ENCODE measurements at regions of chr18 and their contacts with region 1.

Region 1: GRCh38 chr18:22800551-22800951 is 132.6 kb upstream of the RBBP8 start:
- DNase-seq: no peak
- H3K4me3 Mint-ChIP-seq: no peak overlapping the region
- H3K27ac Mint-ChIP-seq: no peak overlapping the region
- H3K4me1 Mint-ChIP-seq: no peaks in the 10 kb centered on the region
- H3K27me3 Mint-ChIP-seq: peaks cover 4% of the 10 kb centered on the region

Region 2: GRCh38 chr18:22348521-22349316 is 451.8 kb before region 1 on chr18:
- CTCF ChIA-PET with region 1: no interaction called
- POLR2A ChIA-PET with region 1: no interaction called
- intact Hi-C with region 1: no loop called
- DNase-seq: no peak
- H3K4me3 Mint-ChIP-seq: peak overlapping the region; percentile 65
- H3K27ac Mint-ChIP-seq: peak overlapping the region; percentile 35
- H3K4me1 Mint-ChIP-seq: peaks cover 20% of the 10 kb centered on the region
- H3K27me3 Mint-ChIP-seq: peaks cover 22% of the 10 kb centered on the region

Region 3: GRCh38 chr18:22521026-22521707 is 279.4 kb before region 1 on chr18:
- CTCF ChIA-PET with region 1: no interaction called
- POLR2A ChIA-PET with region 1: no interaction called
- intact Hi-C with region 1: no loop called
- DNase-seq: no peak
- H3K4me3 Mint-ChIP-seq: no peak overlapping the region
- H3K27ac Mint-ChIP-seq: no peak overlapping the region
- H3K4me1 Mint-ChIP-seq: no peaks in the 10 kb centered on the region
- H3K27me3 Mint-ChIP-seq: peaks cover 2% of the 10 kb centered on the region

Region 4: DNA sequence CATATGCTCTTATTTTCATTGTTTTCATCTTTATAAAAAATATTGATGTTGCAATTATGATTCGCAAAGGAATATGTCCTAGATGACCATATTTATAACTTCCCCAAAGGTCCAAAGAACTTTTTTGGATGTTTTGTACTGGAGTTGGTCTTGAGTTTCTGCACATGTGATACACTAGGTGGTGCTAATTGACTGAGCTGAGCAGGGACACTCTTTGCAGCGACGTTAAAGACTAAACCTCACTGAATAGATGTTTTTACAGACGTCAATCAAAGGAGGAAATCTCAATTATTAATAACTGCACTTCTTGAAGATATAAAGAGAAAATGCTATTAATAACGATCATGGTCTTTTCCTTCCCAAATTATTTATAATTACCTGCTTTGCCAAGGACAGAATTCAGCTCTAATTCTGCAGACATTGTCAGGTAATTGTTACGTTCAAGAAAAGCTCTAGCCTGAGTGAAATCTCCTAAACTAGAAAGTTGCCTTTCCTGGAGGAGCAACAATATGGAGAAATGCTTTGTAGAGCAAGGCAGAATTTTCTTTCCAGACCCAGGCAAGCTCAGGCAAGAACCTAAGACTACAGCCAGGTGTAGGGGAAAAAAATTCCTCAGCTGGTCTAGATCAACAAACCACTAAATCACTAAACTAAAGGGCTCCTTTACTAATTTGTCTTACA is 13.2 kb after region 1 on chr18:
- CTCF ChIA-PET with region 1: interaction called, 27 read pairs
- POLR2A ChIA-PET with region 1: no interaction called
- intact Hi-C with region 1: no loop called
- DNase-seq: no peak
- H3K4me3 Mint-ChIP-seq: no peak overlapping the region
- H3K27ac Mint-ChIP-seq: no peak overlapping the region
- H3K4me1 Mint-ChIP-seq: no peaks in the 10 kb centered on the region
- H3K27me3 Mint-ChIP-seq: peaks cover 19% of the 10 kb centered on the region

Region 5: GRCh38 chr18:22977847-22978701 is 177.5 kb after region 1 on chr18:
- CTCF ChIA-PET with region 1: interaction called, 19 read pairs
- POLR2A ChIA-PET with region 1: no interaction called
- intact Hi-C with region 1: loop called (anchors 1 kb)
- DNase-seq: no peak
- H3K4me3 Mint-ChIP-seq: peak overlapping the region; percentile 30
- H3K27ac Mint-ChIP-seq: peak overlapping the region; percentile 89
- H3K4me1 Mint-ChIP-seq: peaks cover 19% of the 10 kb centered on the region
- H3K27me3 Mint-ChIP-seq: no peaks in the 10 kb centered on the region

Region 6: GRCh38 chr18:22983175-22983574 is 182.6 kb after region 1 on chr18:
- CTCF ChIA-PET with region 1: interaction called, 19 read pairs
- POLR2A ChIA-PET with region 1: no interaction called
- intact Hi-C with region 1: loop called (anchors 1 kb)
- DNase-seq: no peak
- H3K4me3 Mint-ChIP-seq: no peak overlapping the region
- H3K27ac Mint-ChIP-seq: no peak overlapping the region
- H3K4me1 Mint-ChIP-seq: peaks cover 8% of the 10 kb centered on the region
- H3K27me3 Mint-ChIP-seq: no peaks in the 10 kb centered on the region

Region 7: DNA sequence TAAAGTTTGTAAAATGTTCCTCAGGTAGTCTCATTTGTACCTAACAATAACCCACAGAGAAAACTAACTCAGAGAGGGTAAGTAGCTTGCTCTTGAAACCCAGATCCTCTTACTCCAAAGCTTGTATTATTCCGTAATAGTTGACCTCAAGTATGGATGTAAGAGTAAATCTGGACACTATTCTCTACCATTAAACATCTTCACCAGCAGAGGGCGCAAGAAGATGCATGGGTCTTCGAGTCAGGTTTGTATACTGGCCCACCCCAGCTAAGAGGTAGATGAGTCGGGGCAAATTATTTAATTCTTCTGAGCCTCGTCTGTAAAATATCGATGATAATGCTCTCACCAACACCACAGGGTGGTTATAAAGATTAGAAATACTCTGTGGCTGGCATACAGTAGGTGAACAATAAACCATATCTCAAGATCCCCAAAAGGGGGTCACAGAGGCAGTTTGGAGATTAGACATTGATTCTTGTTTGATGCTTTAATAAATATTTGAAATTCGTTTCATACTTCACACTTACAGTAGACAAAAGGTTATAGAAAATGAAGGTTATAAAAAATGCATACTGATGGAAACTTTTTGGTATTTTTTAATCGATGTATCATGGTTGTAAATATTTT is 331.3 kb after region 1 on chr18:
- CTCF ChIA-PET with region 1: interaction called, 5 read pairs
- POLR2A ChIA-PET with region 1: no interaction called
- intact Hi-C with region 1: loop called (anchors 5 kb)
- DNase-seq: peak; percentile 55
- H3K4me3 Mint-ChIP-seq: peak overlapping the region; percentile 8
- H3K27ac Mint-ChIP-seq: no peak overlapping the region
- H3K4me1 Mint-ChIP-seq: peaks cover 14% of the 10 kb centered on the region
- H3K27me3 Mint-ChIP-seq: peaks cover 25% of the 10 kb centered on the region